ENCODE measurements at regions of chr13 and their contacts with region 1.

Region 1: GRCh38 chr13:99656092-99656745 is 154.9 kb downstream of the TM9SF2 start:
- DNase-seq: peak; percentile 79 to 85 (median 81)
- H3K4me3 ChIP-seq: peak overlapping the region in 1 of 2 donors; percentile 43
- H3K4me3 Mint-ChIP-seq: peak overlapping the region; percentile 74 to 88 (median 86)
- H3K27ac ChIP-seq: peak overlapping the region; percentile 76
- H3K27ac Mint-ChIP-seq: peak overlapping the region; percentile 88 to 96 (median 95)
- H3K4me1 ChIP-seq: peaks cover 56% of the 10 kb centered on the region
- H3K4me1 Mint-ChIP-seq: peaks cover 33 to 55% (median 42%) of the 10 kb centered on the region in 4 donors
- H3K27me3 ChIP-seq: no peaks in the 10 kb centered on the region
- H3K27me3 Mint-ChIP-seq: no peaks in the 10 kb centered on the region

Region 2: DNA sequence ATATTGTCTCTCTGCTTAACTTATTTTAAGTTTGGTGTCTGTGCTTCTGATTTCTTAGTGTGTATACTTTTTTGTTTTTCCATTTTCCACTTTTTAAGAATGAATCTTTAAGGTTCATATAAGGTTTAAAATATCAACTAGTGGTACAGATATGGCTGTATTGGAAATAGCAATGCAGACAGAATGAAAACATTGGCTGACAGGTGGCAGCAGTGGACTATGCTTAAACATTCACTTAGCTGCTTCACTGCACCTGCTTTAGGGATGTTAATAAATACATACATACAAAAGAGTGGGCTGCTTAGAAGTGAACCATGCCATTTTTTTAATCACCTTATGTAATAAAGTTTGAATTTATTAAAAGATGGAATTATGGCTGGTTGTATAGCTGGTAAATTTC is 127.7 kb before region 1 on chr13:
- CTCF ChIA-PET with region 1: interaction called, 20 read pairs
- POLR2A ChIA-PET with region 1: no interaction called
- intact Hi-C with region 1: loop called (anchors 1 kb)
- DNase-seq: peak in 4 of 5 donors; percentile 40 to 47 (median 42)
- H3K4me3 ChIP-seq: no peak overlapping the region
- H3K4me3 Mint-ChIP-seq: no peak overlapping the region
- H3K27ac ChIP-seq: no peak overlapping the region
- H3K27ac Mint-ChIP-seq: peak overlapping the region in 1 of 7 donors; percentile 53
- H3K4me1 ChIP-seq: peaks cover 21% of the 10 kb centered on the region
- H3K4me1 Mint-ChIP-seq: peaks cover 39 to 61% (median 45%) of the 10 kb centered on the region in 4 donors
- H3K27me3 ChIP-seq: no peaks in the 10 kb centered on the region
- H3K27me3 Mint-ChIP-seq: no peaks in the 10 kb centered on the region

Region 3: DNA sequence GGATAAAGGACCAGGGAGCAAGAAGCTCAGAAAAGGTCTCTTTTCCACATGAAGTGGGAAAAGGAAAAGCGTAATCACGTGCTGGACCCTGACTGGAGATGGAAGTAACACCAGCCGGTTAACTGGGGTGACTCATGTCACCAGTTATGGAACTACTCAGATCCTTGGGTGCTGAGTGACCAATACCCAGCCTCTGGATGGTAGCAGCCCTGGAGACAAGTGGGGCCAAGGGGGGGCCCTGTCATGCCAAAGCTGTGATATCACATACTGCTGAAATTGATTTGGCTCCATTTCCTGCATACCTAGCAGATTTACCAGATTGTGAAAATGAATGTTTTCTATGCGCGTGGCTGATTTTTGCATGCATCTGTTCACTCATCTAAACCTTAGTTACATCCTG is 156.4 kb after region 1 on chr13:
- CTCF ChIA-PET with region 1: interaction called, 33 read pairs
- POLR2A ChIA-PET with region 1: interaction called, 40 read pairs
- intact Hi-C with region 1: no loop called
- DNase-seq: no peak
- H3K4me3 ChIP-seq: no peak overlapping the region
- H3K4me3 Mint-ChIP-seq: no peak overlapping the region
- H3K27ac ChIP-seq: no peak overlapping the region
- H3K27ac Mint-ChIP-seq: no peak overlapping the region
- H3K4me1 ChIP-seq: peaks cover 2% of the 10 kb centered on the region
- H3K4me1 Mint-ChIP-seq: peaks cover 4 to 16% (median 10%) of the 10 kb centered on the region in 4 donors
- H3K27me3 ChIP-seq: no peaks in the 10 kb centered on the region
- H3K27me3 Mint-ChIP-seq: no peaks in the 10 kb centered on the region

Region 4: DNA sequence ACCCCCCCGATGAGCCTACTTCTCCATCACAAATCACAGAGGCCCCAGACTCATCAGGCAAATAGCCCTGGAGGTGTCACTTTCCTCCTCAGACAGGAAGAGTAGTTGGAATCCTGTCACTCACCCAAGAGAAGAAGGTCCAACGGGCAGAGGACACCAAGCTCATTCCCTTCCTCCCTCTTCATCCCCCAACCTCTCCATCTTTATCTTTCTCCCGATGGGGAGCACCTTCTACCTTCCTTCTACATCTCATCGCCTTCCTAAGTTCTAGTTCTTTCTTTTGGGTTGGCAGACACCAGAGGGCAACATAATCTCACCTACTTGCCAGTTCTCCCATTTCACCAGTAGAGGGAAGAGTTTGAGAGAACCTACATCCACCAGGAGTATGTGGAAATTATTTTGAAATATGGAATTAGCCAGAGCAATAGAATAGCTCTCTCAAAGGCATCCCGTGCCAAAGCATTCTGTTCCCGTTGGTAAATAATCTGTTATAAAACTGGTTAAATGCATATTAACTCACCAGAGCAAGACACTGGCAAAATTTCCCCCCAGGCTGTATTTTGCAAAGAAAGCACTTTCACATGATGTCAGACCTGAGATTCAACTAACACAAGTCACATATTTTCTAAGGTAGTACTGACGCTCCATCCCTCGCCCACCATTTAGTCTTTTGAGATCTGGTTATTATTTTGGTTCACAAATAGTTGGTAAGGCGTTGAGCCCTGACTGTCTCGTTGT is 260.3 kb after region 1 on chr13:
- CTCF ChIA-PET with region 1: interaction called, 63 read pairs
- POLR2A ChIA-PET with region 1: interaction called, 20 read pairs
- intact Hi-C with region 1: loop called (anchors 1 kb)
- DNase-seq: peak; percentile 45 to 52 (median 49)
- H3K4me3 ChIP-seq: no peak overlapping the region
- H3K4me3 Mint-ChIP-seq: no peak overlapping the region
- H3K27ac ChIP-seq: no peak overlapping the region
- H3K27ac Mint-ChIP-seq: no peak overlapping the region
- H3K4me1 ChIP-seq: peaks cover 24% of the 10 kb centered on the region
- H3K4me1 Mint-ChIP-seq: peaks cover 12 to 21% (median 18%) of the 10 kb centered on the region in 4 donors
- H3K27me3 ChIP-seq: no peaks in the 10 kb centered on the region
- H3K27me3 Mint-ChIP-seq: peaks cover 0 to 2% of the 10 kb centered on the region in 2 donors

Region 5: GRCh38 chr13:100235311-100235901 is 579.2 kb after region 1 on chr13:
- CTCF ChIA-PET with region 1: interaction called, 125 read pairs
- POLR2A ChIA-PET with region 1: interaction called, 29 read pairs
- intact Hi-C with region 1: loop called (anchors 1 kb)
- DNase-seq: peak in 4 of 5 donors; percentile 37 to 52 (median 44)
- H3K4me3 ChIP-seq: no peak overlapping the region
- H3K4me3 Mint-ChIP-seq: peak overlapping the region in 2 of 8 donors; percentile 13 to 70
- H3K27ac ChIP-seq: no peak overlapping the region
- H3K27ac Mint-ChIP-seq: no peak overlapping the region
- H3K4me1 ChIP-seq: peaks cover 6% of the 10 kb centered on the region
- H3K4me1 Mint-ChIP-seq: peaks cover 4 to 5% (median 4%) of the 10 kb centered on the region in 4 donors
- H3K27me3 ChIP-seq: no peaks in the 10 kb centered on the region
- H3K27me3 Mint-ChIP-seq: peaks cover 0 to 1% of the 10 kb centered on the region in 2 donors

Region 6: DNA sequence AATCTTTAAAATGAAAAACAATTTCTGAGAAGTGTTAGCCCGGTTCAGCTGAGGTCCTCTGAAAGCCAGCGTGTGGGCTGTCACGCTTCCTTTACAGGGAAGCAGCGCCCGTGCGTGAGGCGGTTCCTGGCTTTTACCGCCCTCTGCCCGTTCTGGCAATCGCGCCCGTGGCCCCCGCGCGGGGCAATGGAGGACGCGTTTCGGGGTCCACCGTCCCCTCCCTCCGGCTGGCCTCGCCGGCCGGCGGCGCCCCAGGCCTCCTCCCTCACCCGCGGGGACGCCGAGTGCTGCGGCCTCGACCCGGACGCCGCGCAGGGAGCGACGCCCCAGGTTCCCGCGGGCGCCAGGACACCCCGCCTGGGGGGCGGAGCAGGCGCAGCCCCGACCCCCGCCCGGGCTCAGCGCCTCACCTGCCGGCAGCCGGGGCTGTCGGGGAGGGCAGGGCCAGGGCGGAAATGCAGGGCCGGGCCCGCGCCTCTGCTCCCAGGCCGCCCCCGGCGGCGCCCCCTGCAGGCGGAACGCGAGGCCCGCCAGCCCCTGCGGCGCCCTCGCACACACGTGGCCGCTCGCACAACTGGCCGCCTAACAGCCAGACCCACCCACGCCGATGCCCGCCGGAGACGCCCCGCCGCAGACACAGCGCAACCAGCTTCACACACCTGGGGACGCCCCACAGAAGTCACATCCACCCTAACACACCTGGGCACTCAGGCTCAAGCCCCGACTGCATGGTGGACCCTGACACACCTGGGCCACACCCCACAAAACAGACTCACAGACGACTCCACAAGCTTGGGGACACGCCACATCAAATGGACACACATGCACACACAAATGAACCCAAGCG is 932.3 kb after region 1 on chr13 and contains the start of gene GGACT:
- CTCF ChIA-PET with region 1: interaction called, 6 read pairs
- POLR2A ChIA-PET with region 1: interaction called, 3 read pairs
- intact Hi-C with region 1: loop called (anchors 1 kb)
- DNase-seq: peak; percentile 77 to 87 (median 83)
- H3K4me3 ChIP-seq: peak within 1 kb of the TSS; percentile 57 to 77
- H3K4me3 Mint-ChIP-seq: peak within 1 kb of the TSS; percentile 82 to 90 (median 86)
- H3K27ac ChIP-seq: peak within 1 kb of the TSS; percentile 74
- H3K27ac Mint-ChIP-seq: peak within 1 kb of the TSS; percentile 83 to 95 (median 91)
- H3K4me1 ChIP-seq: peaks cover 42% of the 10 kb centered on the region
- H3K4me1 Mint-ChIP-seq: peaks cover 34 to 50% (median 41%) of the 10 kb centered on the region in 4 donors
- H3K27me3 ChIP-seq: no peaks in the 10 kb centered on the region
- H3K27me3 Mint-ChIP-seq: no peaks in the 10 kb centered on the region
- total RNA-seq, gene GGACT: 6.7 to 9.6 TPM

Measured in CD4-positive, alpha-beta memory T cell (primary cell).